OCI-LY7 (cell line): ENCODE measurements at regions of chr13 and their contacts with region 1.

Region 1: GRCh38 chr13:89150362-89150761 is 1479.2 kb downstream of the SLITRK5 start:
- DNase-seq: no peak
- H3K4me3 ChIP-seq: no peak overlapping the region
- H3K27ac ChIP-seq: no peak overlapping the region
- H3K4me1 ChIP-seq: no peaks in the 10 kb centered on the region
- CTCF ChIP-seq: no peak

Region 2: DNA sequence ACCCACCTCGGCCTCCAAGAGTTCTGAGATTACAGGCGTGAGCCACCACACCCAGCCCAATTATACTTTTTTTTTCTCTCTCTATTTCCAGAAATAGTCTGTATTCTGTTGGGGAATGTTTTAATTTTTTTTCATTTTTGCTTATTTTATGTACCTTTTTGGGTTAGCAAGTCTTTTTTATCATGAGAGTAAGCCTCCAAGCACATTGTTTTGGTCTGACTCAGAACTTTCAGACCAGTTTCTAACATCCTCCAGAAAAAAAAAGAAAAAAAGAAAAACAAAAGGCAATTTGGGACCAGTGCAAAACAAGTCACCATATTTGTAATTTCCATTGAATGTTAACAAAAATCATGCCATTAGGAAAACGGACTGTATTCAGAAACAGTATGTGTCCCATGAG is 13.7 kb before region 1 on chr13:
- CTCF ChIA-PET with region 1: no interaction called
- POLR2A ChIA-PET with region 1: interaction called, 3 read pairs
- intact Hi-C with region 1: loop called (anchors 1 kb)
- DNase-seq: no peak
- H3K4me3 ChIP-seq: no peak overlapping the region
- H3K27ac ChIP-seq: no peak overlapping the region
- H3K4me1 ChIP-seq: no peaks in the 10 kb centered on the region
- CTCF ChIP-seq: no peak